ENCODE measurements at regions of chr9 and their contacts with region 1.

Region 1: GRCh38 chr9:12640016-12640587 is 53.1 kb upstream of the TYRP1 start:
- DNase-seq: no peak
- H3K4me3 ChIP-seq: no peak overlapping the region
- H3K27ac ChIP-seq: no peak overlapping the region
- H3K4me1 ChIP-seq: no peaks in the 10 kb centered on the region
- H3K27me3 ChIP-seq: no peaks in the 10 kb centered on the region
- CTCF ChIP-seq: peak in 2 of 3 experiments; percentile 52 to 64; a peak in 2 of 4 replicates
- EP300 ChIP-seq: no peak
- POLR2A ChIP-seq: no peak
- RAD21 ChIP-seq: peak; percentile 84 to 87

Region 2: GRCh38 chr9:12554636-12555035 is 85.5 kb before region 1 on chr9:
- CTCF ChIA-PET with region 1: interaction called, 19 read pairs
- POLR2A ChIA-PET with region 1: no interaction called
- DNase-seq: no peak
- H3K4me3 ChIP-seq: no peak overlapping the region
- H3K27ac ChIP-seq: no peak overlapping the region
- H3K4me1 ChIP-seq: peaks cover 0 to under 1% (median 0%) of the 10 kb centered on the region in 4 experiments; a peak in 1 of 7 replicates
- H3K27me3 ChIP-seq: no peaks in the 10 kb centered on the region
- CTCF ChIP-seq: peak in 2 of 3 experiments; percentile 23 to 38; a peak in 2 of 4 replicates
- EP300 ChIP-seq: no peak
- POLR2A ChIP-seq: no peak
- RAD21 ChIP-seq: peak; percentile 46 to 53

Region 3: DNA sequence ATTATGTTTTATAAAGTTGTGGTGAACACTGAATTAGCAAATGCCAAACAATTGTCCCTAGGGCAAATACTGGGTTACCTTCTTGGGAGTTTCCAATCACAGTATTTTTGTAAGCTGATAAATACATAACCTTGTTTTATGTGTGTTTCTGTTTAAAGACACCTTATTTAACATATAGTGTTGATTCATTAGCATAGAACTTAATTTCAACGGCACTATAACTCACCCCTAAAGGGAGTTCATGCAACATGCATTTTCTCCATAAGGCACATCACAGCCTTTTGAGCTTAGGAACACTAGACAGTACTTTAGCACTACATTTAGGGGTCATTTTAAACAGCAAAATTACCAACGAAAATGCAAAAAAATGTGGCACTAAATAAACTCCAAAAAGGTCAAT is 21.1 kb before region 1 on chr9:
- CTCF ChIA-PET with region 1: interaction called, 10 read pairs
- POLR2A ChIA-PET with region 1: no interaction called
- DNase-seq: no peak
- H3K4me3 ChIP-seq: no peak overlapping the region
- H3K27ac ChIP-seq: no peak overlapping the region
- H3K4me1 ChIP-seq: no peaks in the 10 kb centered on the region
- H3K27me3 ChIP-seq: no peaks in the 10 kb centered on the region
- CTCF ChIP-seq: no peak
- EP300 ChIP-seq: no peak
- POLR2A ChIP-seq: no peak
- RAD21 ChIP-seq: no peak

Measured in H1 (cell line).